Caco-2 (cell line): ENCODE measurements at regions of chr5 and their contacts with region 1.

Region 1: GRCh38 chr5:115544436-115545350 is at the start of gene FEM1C:
- DNase-seq: peak; percentile 97
- H3K4me3 ChIP-seq: peak within 1 kb of the TSS; percentile 96
- H3K4me3 Mint-ChIP-seq: peak within 1 kb of the TSS; percentile 80
- H3K27ac Mint-ChIP-seq: peak within 1 kb of the TSS; percentile 93
- H3K4me1 ChIP-seq: peaks cover 24% of the 10 kb centered on the region
- H3K4me1 Mint-ChIP-seq: peaks cover 7% of the 10 kb centered on the region
- H3K27me3 ChIP-seq: no peaks in the 10 kb centered on the region
- H3K27me3 Mint-ChIP-seq: no peaks in the 10 kb centered on the region
- CTCF ChIP-seq: no peak
- total RNA-seq, gene FEM1C: 11.1 and 11.8 TPM in 2 replicates

Region 2: DNA sequence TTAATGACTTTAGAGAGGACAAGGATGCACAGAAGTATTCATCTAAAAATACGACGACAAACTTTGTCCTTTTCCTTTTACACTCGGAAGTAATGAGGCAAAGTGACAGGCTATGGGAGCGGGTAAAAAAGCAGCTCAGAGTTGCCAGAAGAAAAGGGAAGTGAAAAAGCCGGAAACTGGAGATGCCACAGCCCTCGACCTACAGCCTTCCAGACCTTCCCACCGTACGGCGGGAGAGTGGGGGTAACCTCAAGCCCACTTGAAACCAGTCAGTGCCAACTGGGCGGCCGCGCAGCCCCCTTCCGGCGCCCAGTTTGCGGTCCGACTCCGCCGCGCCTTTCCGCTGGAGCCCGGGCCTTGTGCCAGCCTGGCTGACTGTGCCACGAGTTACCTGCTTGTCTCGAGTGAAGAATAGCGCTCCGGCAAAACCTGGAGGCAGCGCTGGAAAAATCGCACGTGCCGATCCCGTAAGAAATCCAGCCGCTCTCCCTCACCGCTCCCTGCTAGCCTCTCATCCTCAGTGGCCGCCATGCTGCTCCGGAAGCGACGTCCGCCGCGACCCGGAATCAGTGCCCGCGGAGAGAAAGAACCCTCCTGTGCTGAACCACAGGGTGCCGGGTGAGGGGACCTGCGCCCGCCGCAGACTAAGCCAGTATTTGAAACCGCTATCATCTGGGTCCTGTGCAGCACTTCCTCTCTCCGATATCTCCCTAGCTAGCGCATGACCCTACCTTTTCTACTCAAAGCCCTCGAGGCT is 282.2 kb before region 1 on chr5 and contains the start of gene PGGT1B:
- CTCF ChIA-PET with region 1: no interaction called
- POLR2A ChIA-PET with region 1: no interaction called
- intact Hi-C with region 1: loop called (anchors 5 kb)
- DNase-seq: peak; percentile 71 to 75
- H3K4me3 ChIP-seq: peak within 1 kb of the TSS; percentile 86
- H3K4me3 Mint-ChIP-seq: peak within 1 kb of the TSS; percentile 84
- H3K27ac Mint-ChIP-seq: peak within 1 kb of the TSS; percentile 55
- H3K4me1 ChIP-seq: peaks cover 7% of the 10 kb centered on the region; the same call in 1 of the 2 replicates
- H3K4me1 Mint-ChIP-seq: no peaks in the 10 kb centered on the region
- H3K27me3 ChIP-seq: no peaks in the 10 kb centered on the region
- H3K27me3 Mint-ChIP-seq: no peaks in the 10 kb centered on the region
- CTCF ChIP-seq: no peak
- total RNA-seq, gene PGGT1B: 38.3 and 39.4 TPM in 2 replicates

Region 3: GRCh38 chr5:115309751-115310370 is 234.8 kb before region 1 on chr5:
- CTCF ChIA-PET with region 1: interaction called, 14 read pairs
- POLR2A ChIA-PET with region 1: no interaction called
- intact Hi-C with region 1: no loop called
- DNase-seq: peak in 1 of 2 experiments; percentile 24
- H3K4me3 ChIP-seq: no peak overlapping the region
- H3K4me3 Mint-ChIP-seq: no peak overlapping the region
- H3K27ac Mint-ChIP-seq: no peak overlapping the region
- H3K4me1 ChIP-seq: no peaks in the 10 kb centered on the region
- H3K4me1 Mint-ChIP-seq: no peaks in the 10 kb centered on the region
- H3K27me3 ChIP-seq: no peaks in the 10 kb centered on the region
- H3K27me3 Mint-ChIP-seq: no peaks in the 10 kb centered on the region
- CTCF ChIP-seq: peak in 1 of 2 experiments; percentile 43

Region 4: DNA sequence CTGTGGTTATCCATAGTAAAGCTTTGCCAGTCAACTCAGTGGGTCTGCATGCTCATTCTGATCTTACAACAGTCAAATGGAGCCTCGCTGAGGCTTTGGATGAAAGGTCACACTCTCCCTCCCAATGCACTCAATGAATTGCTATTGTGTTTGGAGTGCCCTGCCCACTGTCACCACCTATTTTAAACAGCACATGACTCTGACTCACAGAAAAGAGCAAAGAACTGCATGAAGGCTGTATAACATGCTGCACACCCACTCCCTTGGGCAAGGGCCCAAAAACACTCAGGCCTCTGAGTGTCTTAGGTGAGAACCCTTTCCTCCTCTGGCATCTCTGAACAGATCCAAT is 129.6 kb before region 1 on chr5:
- CTCF ChIA-PET with region 1: no interaction called
- POLR2A ChIA-PET with region 1: no interaction called
- intact Hi-C with region 1: loop called (anchors 5 kb)
- DNase-seq: peak; percentile 15 to 54
- H3K4me3 ChIP-seq: no peak overlapping the region
- H3K4me3 Mint-ChIP-seq: no peak overlapping the region
- H3K27ac Mint-ChIP-seq: peak overlapping the region; percentile 50
- H3K4me1 ChIP-seq: peaks cover 10% of the 10 kb centered on the region; the same call in 1 of the 2 replicates
- H3K4me1 Mint-ChIP-seq: peaks cover 12% of the 10 kb centered on the region
- H3K27me3 ChIP-seq: no peaks in the 10 kb centered on the region
- H3K27me3 Mint-ChIP-seq: peaks cover 4% of the 10 kb centered on the region
- CTCF ChIP-seq: no peak

Region 5: DNA sequence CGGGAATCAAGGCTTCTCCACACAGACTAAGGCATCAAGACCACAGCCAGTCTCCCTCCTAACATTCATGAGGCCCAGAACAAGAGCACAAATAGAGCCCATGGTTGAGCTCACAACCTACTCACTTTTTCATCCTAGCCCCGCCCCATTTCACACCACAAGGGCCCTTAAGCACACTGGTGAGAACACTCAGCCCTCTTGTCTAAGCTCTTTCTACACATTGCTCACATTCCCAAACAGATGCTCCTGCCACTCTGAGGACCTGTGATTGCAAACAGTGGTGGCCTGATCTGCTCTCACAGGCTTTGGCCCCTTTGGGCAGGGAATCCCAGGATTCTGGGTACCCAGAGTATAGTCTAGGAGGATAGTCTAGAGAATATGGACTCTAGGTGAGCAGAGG is 54.1 kb before region 1 on chr5:
- CTCF ChIA-PET with region 1: no interaction called
- POLR2A ChIA-PET with region 1: no interaction called
- intact Hi-C with region 1: no loop called
- DNase-seq: no peak
- H3K4me3 ChIP-seq: no peak overlapping the region
- H3K4me3 Mint-ChIP-seq: no peak overlapping the region
- H3K27ac Mint-ChIP-seq: no peak overlapping the region
- H3K4me1 ChIP-seq: no peaks in the 10 kb centered on the region
- H3K4me1 Mint-ChIP-seq: no peaks in the 10 kb centered on the region
- H3K27me3 ChIP-seq: no peaks in the 10 kb centered on the region; the same call in 1 of the 2 replicates
- H3K27me3 Mint-ChIP-seq: peaks cover 12% of the 10 kb centered on the region
- CTCF ChIP-seq: no peak

Region 6: DNA sequence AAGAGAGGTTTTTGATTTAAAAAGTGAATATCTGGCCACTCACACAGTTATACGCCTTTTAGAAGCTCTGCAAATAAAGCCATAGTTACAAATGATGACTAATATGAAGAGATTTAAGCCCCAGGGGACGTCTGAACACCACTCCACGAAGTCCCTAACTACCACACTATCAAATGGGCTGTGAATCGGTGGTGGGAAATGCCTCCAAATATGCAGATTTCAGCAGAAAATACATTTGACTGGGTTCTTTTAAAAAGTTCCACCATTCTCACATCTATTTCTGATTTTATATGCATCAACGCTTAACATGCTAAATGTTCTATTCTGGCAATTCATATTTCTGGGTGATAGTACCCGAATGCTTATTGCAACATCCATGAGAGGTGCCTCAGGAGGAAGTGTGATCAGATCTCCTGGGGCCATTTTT is 35.1 kb after region 1 on chr5:
- CTCF ChIA-PET with region 1: interaction called, 14 read pairs
- POLR2A ChIA-PET with region 1: no interaction called
- intact Hi-C with region 1: loop called (anchors 1 kb)
- DNase-seq: no peak
- H3K4me3 ChIP-seq: no peak overlapping the region
- H3K4me3 Mint-ChIP-seq: no peak overlapping the region
- H3K27ac Mint-ChIP-seq: no peak overlapping the region
- H3K4me1 ChIP-seq: no peaks in the 10 kb centered on the region
- H3K4me1 Mint-ChIP-seq: no peaks in the 10 kb centered on the region
- H3K27me3 ChIP-seq: no peaks in the 10 kb centered on the region
- H3K27me3 Mint-ChIP-seq: no peaks in the 10 kb centered on the region
- CTCF ChIP-seq: no peak

Region 7: DNA sequence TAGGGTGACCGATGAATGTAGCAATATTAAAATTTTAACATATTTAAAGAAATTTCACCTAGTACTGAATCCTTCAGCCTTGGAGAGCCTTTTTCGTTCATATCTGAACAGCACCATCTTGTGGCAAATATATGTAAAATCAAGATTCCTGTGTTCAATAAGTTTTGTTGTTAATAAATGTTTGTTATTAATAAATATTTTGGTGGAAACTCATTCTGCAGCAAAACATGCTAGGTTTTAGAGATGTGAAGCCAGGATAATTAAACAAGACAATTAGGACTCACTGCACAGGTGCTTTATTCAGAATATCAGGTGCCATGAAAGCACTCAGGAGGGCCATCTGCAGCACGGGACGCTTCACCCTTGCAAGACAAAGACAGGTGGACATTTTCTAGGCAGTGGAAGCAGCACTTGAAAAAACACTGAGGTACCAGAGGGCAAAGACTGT is 41.9 kb after region 1 on chr5:
- CTCF ChIA-PET with region 1: no interaction called
- POLR2A ChIA-PET with region 1: no interaction called
- intact Hi-C with region 1: loop called (anchors 1 kb)
- DNase-seq: peak in 1 of 2 experiments; percentile 5
- H3K4me3 ChIP-seq: no peak overlapping the region
- H3K4me3 Mint-ChIP-seq: no peak overlapping the region
- H3K27ac Mint-ChIP-seq: no peak overlapping the region
- H3K4me1 ChIP-seq: no peaks in the 10 kb centered on the region
- H3K4me1 Mint-ChIP-seq: no peaks in the 10 kb centered on the region
- H3K27me3 ChIP-seq: no peaks in the 10 kb centered on the region
- H3K27me3 Mint-ChIP-seq: no peaks in the 10 kb centered on the region
- CTCF ChIP-seq: peak; percentile 38 to 60

Region 8: GRCh38 chr5:115774684-115775083 is 230.0 kb after region 1 on chr5:
- CTCF ChIA-PET with region 1: no interaction called
- POLR2A ChIA-PET with region 1: no interaction called
- intact Hi-C with region 1: no loop called
- DNase-seq: no peak
- H3K4me3 ChIP-seq: no peak overlapping the region
- H3K4me3 Mint-ChIP-seq: no peak overlapping the region
- H3K27ac Mint-ChIP-seq: no peak overlapping the region
- H3K4me1 ChIP-seq: peaks cover 6% of the 10 kb centered on the region; the same call in 1 of the 2 replicates
- H3K4me1 Mint-ChIP-seq: no peaks in the 10 kb centered on the region
- H3K27me3 ChIP-seq: no peaks in the 10 kb centered on the region
- H3K27me3 Mint-ChIP-seq: no peaks in the 10 kb centered on the region
- CTCF ChIP-seq: no peak

Region 9: GRCh38 chr5:115841382-115842088 is 296.8 kb after region 1 on chr5 and contains the starts of genes AP3S1 and ATG12:
- CTCF ChIA-PET with region 1: no interaction called
- POLR2A ChIA-PET with region 1: no interaction called
- intact Hi-C with region 1: loop called (anchors 5 kb)
- DNase-seq: peak; percentile 91 to 94
- H3K4me3 ChIP-seq: peak within 1 kb of the TSS; percentile 61
- H3K4me3 Mint-ChIP-seq: peak within 1 kb of the TSS; percentile 95
- H3K27ac Mint-ChIP-seq: peak within 1 kb of the TSS; percentile 97
- H3K4me1 ChIP-seq: peaks cover 41% of the 10 kb centered on the region
- H3K4me1 Mint-ChIP-seq: peaks cover 20% of the 10 kb centered on the region
- H3K27me3 ChIP-seq: no peaks in the 10 kb centered on the region
- H3K27me3 Mint-ChIP-seq: no peaks in the 10 kb centered on the region
- CTCF ChIP-seq: no peak
- total RNA-seq, gene AP3S1: 104 and 106 TPM in 2 replicates
- total RNA-seq, gene ATG12: 46.8 and 47.5 TPM in 2 replicates

Region 10: GRCh38 chr5:115857636-115858309 is 313.1 kb after region 1 on chr5:
- CTCF ChIA-PET with region 1: no interaction called
- POLR2A ChIA-PET with region 1: no interaction called
- intact Hi-C with region 1: no loop called
- DNase-seq: no peak
- H3K4me3 ChIP-seq: no peak overlapping the region
- H3K4me3 Mint-ChIP-seq: no peak overlapping the region
- H3K27ac Mint-ChIP-seq: peak overlapping the region; percentile 26
- H3K4me1 ChIP-seq: peaks cover 33% of the 10 kb centered on the region
- H3K4me1 Mint-ChIP-seq: peaks cover 28% of the 10 kb centered on the region
- H3K27me3 ChIP-seq: no peaks in the 10 kb centered on the region
- H3K27me3 Mint-ChIP-seq: no peaks in the 10 kb centered on the region
- CTCF ChIP-seq: no peak